HCT116 (cell line): ENCODE measurements at regions of chr1 and their contacts with region 1.

Region 1: GRCh38 chr1:56249234-56249633 is 330.1 kb downstream of the PLPP3 start:
- DNase-seq: no peak
- ATAC-seq: no peak
- H3K4me3 ChIP-seq: no peak overlapping the region
- H3K27ac ChIP-seq: no peak overlapping the region
- H3K4me1 ChIP-seq: no peaks in the 10 kb centered on the region
- H3K27me3 ChIP-seq: no peaks in the 10 kb centered on the region
- CTCF ChIP-seq: no peak
- POLR2A ChIP-seq: no peak
- RAD21 ChIP-seq: no peak

Region 2: DNA sequence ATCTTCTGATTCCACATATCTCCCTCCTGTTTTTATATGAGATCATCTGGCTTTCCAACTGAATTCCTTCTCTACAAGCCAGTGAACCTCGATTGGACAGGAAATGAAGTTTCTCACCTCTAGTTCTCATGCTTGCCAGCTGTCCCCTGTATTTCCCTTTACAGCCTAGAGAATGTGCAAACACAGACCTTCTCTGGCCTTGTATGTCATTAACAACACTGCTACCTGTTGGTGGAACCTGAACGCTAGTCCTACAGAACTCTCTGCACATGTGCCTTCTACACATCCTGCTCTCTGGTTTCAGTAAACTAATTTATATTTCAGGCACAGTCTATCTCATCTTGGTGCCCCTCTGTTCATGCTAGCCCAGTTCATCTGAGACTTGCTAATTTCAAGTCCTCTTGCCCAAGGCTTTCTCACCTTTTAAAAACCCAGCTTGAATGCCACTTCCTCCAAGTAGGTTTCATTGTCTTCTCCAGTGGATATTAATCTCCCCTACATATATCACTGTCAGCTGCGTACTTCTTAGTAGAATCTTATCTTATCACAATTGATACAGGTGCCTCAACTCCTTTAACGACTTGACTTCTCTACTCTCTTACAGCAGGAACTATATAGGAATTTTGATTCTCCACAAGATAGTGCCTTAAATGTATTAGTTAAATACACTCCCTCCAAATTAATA is 219.8 kb before region 1 on chr1:
- CTCF ChIA-PET with region 1: no interaction called
- POLR2A ChIA-PET with region 1: no interaction called
- RAD21 ChIA-PET with region 1: no interaction called
- intact Hi-C with region 1: loop called (anchors 10 kb)
- DNase-seq: no peak
- ATAC-seq: peak; percentile 40; the same call in 1 of the 2 replicates
- H3K4me3 ChIP-seq: no peak overlapping the region
- H3K27ac ChIP-seq: no peak overlapping the region
- H3K4me1 ChIP-seq: no peaks in the 10 kb centered on the region
- H3K27me3 ChIP-seq: no peaks in the 10 kb centered on the region
- CTCF ChIP-seq: no peak
- POLR2A ChIP-seq: no peak
- RAD21 ChIP-seq: no peak; the same call in 1 of the 2 replicates